ENCODE measurements at regions of chr6 and their contacts with region 1.

Region 1: DNA sequence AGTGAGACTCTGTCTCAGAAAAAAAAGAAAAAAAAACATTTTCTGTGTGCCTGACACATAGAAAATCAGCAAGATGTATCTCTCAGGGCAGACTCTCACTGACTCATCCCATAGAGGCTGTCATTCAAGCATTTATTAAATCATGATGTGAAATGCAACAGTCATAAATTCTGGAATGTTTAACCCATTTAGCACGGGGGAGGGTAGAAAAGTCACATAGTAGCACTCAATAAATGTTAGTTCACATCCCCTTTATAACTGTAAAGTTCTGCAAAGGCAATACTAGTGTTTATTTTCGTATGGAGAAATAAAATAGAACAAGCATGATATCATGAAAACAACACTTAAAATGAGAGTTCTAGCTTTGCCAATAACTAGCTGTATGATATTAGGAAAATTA is 15.5 kb upstream of the CARMIL1 start:
- DNase-seq: no peak
- ATAC-seq: no peak
- H3K4me3 ChIP-seq: no peak overlapping the region
- H3K27ac ChIP-seq: no peak overlapping the region
- H3K4me1 ChIP-seq: no peaks in the 10 kb centered on the region
- H3K27me3 ChIP-seq: no peaks in the 10 kb centered on the region
- CTCF ChIP-seq: no peak

Region 2: DNA sequence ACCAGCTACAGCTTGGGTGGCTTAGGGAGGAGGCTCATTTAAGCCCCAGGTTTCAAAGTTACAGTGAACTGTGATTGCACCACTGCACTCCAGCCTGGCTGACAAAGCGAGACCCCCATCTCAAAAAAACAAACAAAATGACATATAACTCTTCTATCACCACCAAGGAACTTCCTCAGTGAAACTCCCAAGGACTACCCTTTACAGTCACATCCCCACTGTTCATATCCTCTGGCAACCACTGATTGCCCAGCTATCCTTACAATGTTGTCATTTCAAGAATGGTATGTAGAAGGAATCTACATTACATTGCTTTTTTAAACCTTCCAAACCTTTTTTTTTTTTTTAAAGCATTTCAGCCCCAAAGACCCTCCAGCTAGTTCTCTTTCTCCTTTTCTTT is 107.6 kb before region 1 on chr6:
- intact Hi-C with region 1: no loop called
- DNase-seq: no peak
- ATAC-seq: peak; percentile 23 to 25
- H3K4me3 ChIP-seq: no peak overlapping the region
- H3K27ac ChIP-seq: no peak overlapping the region
- H3K4me1 ChIP-seq: no peaks in the 10 kb centered on the region
- H3K27me3 ChIP-seq: no peaks in the 10 kb centered on the region
- CTCF ChIP-seq: no peak

Region 3: GRCh38 chr6:25490018-25490801 is 226.6 kb after region 1 on chr6:
- intact Hi-C with region 1: loop called (anchors 10 kb)
- DNase-seq: peak; percentile 77
- ATAC-seq: peak; percentile 96 to 97
- H3K4me3 ChIP-seq: no peak overlapping the region
- H3K27ac ChIP-seq: no peak overlapping the region
- H3K4me1 ChIP-seq: peaks cover 10% of the 10 kb centered on the region
- H3K27me3 ChIP-seq: no peaks in the 10 kb centered on the region
- CTCF ChIP-seq: peak; percentile 75